Dorsolateral prefrontal cortex (tissue), 120 donors: ENCODE measurements at regions of chr17 and their contacts with region 1.

Region 1: DNA sequence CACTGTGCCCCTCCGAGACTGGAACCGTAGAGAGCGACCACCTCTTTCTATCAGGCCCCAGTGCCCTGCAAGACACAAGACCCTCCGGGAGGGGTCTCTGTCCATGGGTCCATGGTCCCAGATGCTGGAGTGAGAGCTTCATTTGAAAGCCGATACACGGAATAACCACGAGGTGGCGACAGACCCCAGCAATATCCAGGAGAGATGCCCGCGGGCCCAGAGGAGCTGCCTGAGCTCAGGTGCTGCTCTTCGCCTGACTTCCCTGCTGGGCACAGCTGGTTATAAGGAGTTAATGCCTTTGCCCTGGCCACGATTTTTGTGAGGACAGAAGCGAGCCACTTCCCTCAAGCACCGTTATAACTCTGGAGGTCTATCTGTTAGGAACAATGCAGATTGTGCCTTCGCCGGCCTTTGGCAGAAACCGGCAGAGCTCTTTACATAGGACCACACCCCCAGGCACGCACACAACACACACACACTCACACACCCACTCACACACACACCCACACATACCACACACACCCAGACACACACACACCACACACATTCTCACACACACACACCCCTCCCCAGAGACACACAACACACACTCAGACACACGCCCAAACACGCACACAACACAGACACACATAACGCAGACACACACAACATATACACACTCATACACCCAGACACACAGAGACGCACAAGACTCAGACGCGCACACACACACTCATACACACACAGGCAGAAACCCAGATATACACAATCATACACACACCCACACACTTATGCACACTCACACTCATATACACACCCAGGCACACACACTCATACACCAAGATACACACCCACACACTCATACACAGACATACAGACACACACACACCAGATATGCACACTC is 436.4 kb downstream of the SOX9 start:
- DNase-seq: peak; percentile 52 to 81 (median 67)
- H3K4me3 ChIP-seq: no peak overlapping the region
- H3K27ac ChIP-seq: no peak overlapping the region
- H3K27me3 ChIP-seq: peaks cover 0 to 24% (median 0%) of the 10 kb centered on the region in 45 donors
- CTCF ChIP-seq: peak; percentile 60 to 92 (median 85)

Region 2: GRCh38 chr17:72618001-72618509 is 60.9 kb after region 1 on chr17:
- intact Hi-C with region 1: loop called in 1 of 2 experiments (anchors 5 kb)
- DNase-seq: peak in 1 of 10 donors; percentile 22
- H3K4me3 ChIP-seq: peak overlapping the region in 10 of 59 donors; percentile 5 to 30 (median 14)
- H3K27ac ChIP-seq: no peak overlapping the region
- H3K27me3 ChIP-seq: peaks cover 0 to 23% (median 0%) of the 10 kb centered on the region in 45 donors
- CTCF ChIP-seq: no peak

Region 3: GRCh38 chr17:72719578-72720493 is 162.7 kb after region 1 on chr17:
- intact Hi-C with region 1: loop called (anchors 5 kb)
- DNase-seq: no peak
- H3K4me3 ChIP-seq: no peak overlapping the region
- H3K27ac ChIP-seq: no peak overlapping the region
- H3K27me3 ChIP-seq: no peaks in the 10 kb centered on the region
- CTCF ChIP-seq: no peak

Region 4: DNA sequence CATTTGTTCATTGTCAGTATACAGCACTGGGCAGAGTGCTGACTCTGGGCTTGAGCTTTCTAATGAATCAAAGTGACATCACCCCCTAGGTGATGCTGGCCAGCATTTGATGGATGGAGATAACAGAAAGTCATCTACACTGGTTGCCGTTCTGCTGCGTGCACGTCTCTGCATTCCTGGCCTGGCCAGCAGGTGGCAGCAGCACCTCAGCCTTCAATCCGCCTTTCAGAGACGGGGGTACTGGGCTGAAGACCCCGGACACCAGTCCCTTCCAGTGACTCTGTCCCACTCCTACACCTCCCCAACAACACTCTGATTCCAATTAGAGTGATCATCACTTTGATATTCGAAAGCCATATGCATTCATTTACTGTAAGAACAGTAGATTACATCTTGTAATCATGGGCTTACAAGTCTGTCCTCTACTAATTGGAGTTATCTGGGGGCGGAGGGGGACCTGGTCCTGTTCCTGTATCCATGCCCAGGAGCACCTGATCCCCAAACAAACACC is 698.5 kb after region 1 on chr17:
- intact Hi-C with region 1: loop called in 1 of 2 experiments (anchors 10 kb)
- DNase-seq: peak in 8 of 10 donors; percentile 61 to 78 (median 71)
- H3K4me3 ChIP-seq: peak overlapping the region in 1 of 59 donors; percentile 12
- H3K27ac ChIP-seq: peak overlapping the region in 2 of 59 donors; percentile 24 to 26
- H3K27me3 ChIP-seq: no peaks in the 10 kb centered on the region
- CTCF ChIP-seq: peak; percentile 94 to 100 (median 99)

Region 5: GRCh38 chr17:74176546-74177001 is 1619.4 kb after region 1 on chr17:
- intact Hi-C with region 1: loop called in 1 of 2 experiments (anchors 5 kb)
- DNase-seq: peak; percentile 46 to 82 (median 76)
- H3K4me3 ChIP-seq: no peak overlapping the region
- H3K27ac ChIP-seq: peak overlapping the region in 7 of 59 donors; percentile 51 to 62 (median 55)
- H3K27me3 ChIP-seq: peaks cover 0 to 10% (median 0%) of the 10 kb centered on the region in 45 donors
- CTCF ChIP-seq: peak; percentile 46 to 94 (median 83)